Body of pancreas (tissue), 4 donors: ENCODE measurements at regions of chr2 and their contacts with region 1.

Region 1: GRCh38 chr2:199979832-199980628 is 24.6 kb downstream of the MAIP1 start:
- DNase-seq: peak; percentile 82 to 92 (median 85)
- ATAC-seq: peak; percentile 74
- H3K4me3 ChIP-seq: no peak overlapping the region
- H3K27ac ChIP-seq: no peak overlapping the region
- H3K4me1 ChIP-seq: no peaks in the 10 kb centered on the region
- H3K27me3 ChIP-seq: no peaks in the 10 kb centered on the region
- CTCF ChIP-seq: peak; percentile 79 to 98 (median 89)
- POLR2A ChIP-seq: no peak

Region 2: DNA sequence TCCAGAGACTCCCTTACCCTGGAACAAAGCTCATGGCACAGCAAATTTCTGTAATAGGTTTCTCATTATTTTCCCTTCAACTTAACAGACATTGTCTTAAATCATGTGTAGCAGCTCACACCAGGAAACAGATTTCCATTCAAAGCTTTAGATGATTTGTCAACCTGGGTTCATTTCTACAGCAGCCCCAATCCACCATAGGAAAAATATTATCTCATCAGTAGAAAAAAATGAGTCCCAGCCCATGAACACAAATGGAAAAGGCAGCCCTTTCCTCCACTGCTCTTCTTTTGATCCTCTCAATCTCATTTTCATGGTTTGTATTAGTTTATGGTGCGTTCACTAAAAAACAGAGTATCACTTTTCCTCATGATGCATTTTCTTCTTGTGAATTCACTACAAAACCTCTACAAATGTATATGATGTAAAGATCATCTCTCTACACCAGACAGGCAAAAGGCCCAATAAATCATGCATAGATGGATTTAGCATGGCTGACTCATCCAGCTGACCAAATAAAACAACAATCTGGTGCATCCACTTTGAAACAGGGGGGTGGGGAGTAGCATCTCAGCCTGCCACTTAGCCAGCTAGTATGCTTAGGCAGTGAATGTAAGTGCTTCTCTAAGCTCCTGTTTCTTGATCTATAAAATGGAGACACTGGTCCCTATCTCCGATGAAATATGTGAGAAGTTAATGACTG is 600.9 kb before region 1 on chr2:
- intact Hi-C with region 1: no loop called
- DNase-seq: no peak
- ATAC-seq: no peak
- H3K4me3 ChIP-seq: no peak overlapping the region
- H3K27ac ChIP-seq: no peak overlapping the region
- H3K4me1 ChIP-seq: peaks cover 2% of the 10 kb centered on the region
- H3K27me3 ChIP-seq: no peaks in the 10 kb centered on the region
- CTCF ChIP-seq: no peak
- POLR2A ChIP-seq: no peak

Region 3: GRCh38 chr2:200319548-200320337 is 339.7 kb after region 1 on chr2:
- intact Hi-C with region 1: no loop called
- DNase-seq: no peak
- ATAC-seq: no peak
- H3K4me3 ChIP-seq: no peak overlapping the region
- H3K27ac ChIP-seq: peak overlapping the region in 3 of 4 donors; percentile 56 to 79 (median 63)
- H3K4me1 ChIP-seq: peaks cover 30% of the 10 kb centered on the region
- H3K27me3 ChIP-seq: no peaks in the 10 kb centered on the region
- CTCF ChIP-seq: no peak
- POLR2A ChIP-seq: no peak

Region 4: DNA sequence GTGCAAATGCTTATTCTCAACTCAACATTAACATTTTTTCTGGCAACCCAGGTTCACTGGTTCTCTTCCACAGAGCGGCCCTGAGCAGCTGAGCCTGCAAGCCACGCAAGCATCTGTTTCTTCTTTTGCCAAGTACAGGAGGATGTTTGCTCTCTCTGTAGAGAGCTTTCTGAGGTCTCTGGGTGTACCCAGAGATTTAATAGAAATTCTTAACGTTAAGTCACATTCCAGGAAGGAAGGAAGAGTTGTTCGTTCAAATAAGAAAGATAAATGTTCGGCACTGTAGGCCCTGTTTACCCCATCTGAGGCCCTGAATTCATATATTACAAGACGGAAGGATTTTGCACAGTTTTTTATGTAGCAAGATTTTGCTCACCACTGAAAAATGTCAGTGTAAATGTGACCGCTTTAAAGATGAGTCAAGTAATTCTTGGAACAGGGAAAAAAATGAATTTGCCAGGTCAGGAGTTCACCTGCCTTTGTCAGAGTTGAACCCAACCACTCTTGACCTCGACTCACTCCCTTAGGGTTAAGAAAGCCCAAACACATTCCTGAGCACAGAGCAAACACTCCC is 499.7 kb after region 1 on chr2:
- intact Hi-C with region 1: loop called (anchors 5 kb)
- DNase-seq: no peak
- ATAC-seq: no peak
- H3K4me3 ChIP-seq: no peak overlapping the region
- H3K27ac ChIP-seq: no peak overlapping the region
- H3K4me1 ChIP-seq: peaks cover 24% of the 10 kb centered on the region
- H3K27me3 ChIP-seq: no peaks in the 10 kb centered on the region
- CTCF ChIP-seq: no peak
- POLR2A ChIP-seq: no peak